Aorta (tissue), 5 donors: ENCODE measurements at regions of chr1 and their contacts with region 1.

Region 1: GRCh38 chr1:21334214-21335087 is 44.2 kb upstream of the ECE1 start:
- DNase-seq: peak; percentile 90 to 92
- ATAC-seq: peak; percentile 73
- H3K4me3 ChIP-seq: no peak overlapping the region
- H3K27ac ChIP-seq: peak overlapping the region; percentile 40 to 92
- H3K4me1 ChIP-seq: peaks cover 2 to 7% of the 10 kb centered on the region in 2 donors
- H3K27me3 ChIP-seq: no peaks in the 10 kb centered on the region

Region 2: GRCh38 chr1:21255278-21255942 is 79.0 kb before region 1 on chr1:
- intact Hi-C with region 1: loop called (anchors 2 kb)
- DNase-seq: peak; percentile 94 to 97
- ATAC-seq: peak; percentile 88
- H3K4me3 ChIP-seq: no peak overlapping the region
- H3K27ac ChIP-seq: peak overlapping the region; percentile 58 to 66
- H3K4me1 ChIP-seq: no peaks in the 10 kb centered on the region
- H3K27me3 ChIP-seq: no peaks in the 10 kb centered on the region

Region 3: GRCh38 chr1:21261551-21262281 is 72.7 kb before region 1 on chr1:
- intact Hi-C with region 1: loop called (anchors 2 kb)
- DNase-seq: peak; percentile 88 to 91
- ATAC-seq: peak; percentile 91
- H3K4me3 ChIP-seq: no peak overlapping the region
- H3K27ac ChIP-seq: peak overlapping the region; percentile 90 to 94
- H3K4me1 ChIP-seq: no peaks in the 10 kb centered on the region
- H3K27me3 ChIP-seq: no peaks in the 10 kb centered on the region

Region 4: DNA sequence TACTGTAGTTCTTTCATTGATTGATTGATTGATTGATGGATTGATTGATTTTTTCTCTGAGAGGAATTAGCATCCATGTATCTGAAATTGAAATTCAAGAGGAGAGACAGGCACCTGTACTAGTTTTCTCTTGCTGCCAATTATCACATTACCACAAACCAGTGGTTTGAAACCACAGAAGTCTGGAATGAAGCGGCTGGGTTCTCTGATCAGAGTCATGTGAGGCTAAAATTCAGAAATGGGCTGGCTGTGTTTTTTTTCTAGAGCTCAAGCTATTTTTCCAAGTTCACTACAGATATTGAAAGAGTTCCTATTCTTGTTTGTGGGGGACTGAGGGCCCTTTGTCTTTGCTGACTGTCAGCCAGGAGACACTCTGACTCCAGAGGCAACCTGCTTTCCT is 115.5 kb after region 1 on chr1:
- intact Hi-C with region 1: no loop called
- DNase-seq: no peak
- ATAC-seq: no peak
- H3K4me3 ChIP-seq: no peak overlapping the region
- H3K27ac ChIP-seq: no peak overlapping the region
- H3K4me1 ChIP-seq: no peaks in the 10 kb centered on the region
- H3K27me3 ChIP-seq: no peaks in the 10 kb centered on the region